ENCODE measurements at regions of chr12 and their contacts with region 1.

Region 1: GRCh38 chr12:27305673-27306456 is 26.8 kb upstream of the BMAL2 start:
- DNase-seq: no peak
- H3K4me3 Mint-ChIP-seq: no peak overlapping the region
- H3K27ac Mint-ChIP-seq: no peak overlapping the region
- H3K4me1 Mint-ChIP-seq: no peaks in the 10 kb centered on the region
- H3K27me3 Mint-ChIP-seq: no peaks in the 10 kb centered on the region

Region 2: GRCh38 chr12:26971963-26972362 is 333.9 kb before region 1 on chr12:
- CTCF ChIA-PET with region 1: interaction called, 11 read pairs
- intact Hi-C with region 1: no loop called
- DNase-seq: peak; percentile 92
- H3K4me3 Mint-ChIP-seq: no peak overlapping the region
- H3K27ac Mint-ChIP-seq: no peak overlapping the region
- H3K4me1 Mint-ChIP-seq: peaks cover 9% of the 10 kb centered on the region
- H3K27me3 Mint-ChIP-seq: no peaks in the 10 kb centered on the region

Region 3: DNA sequence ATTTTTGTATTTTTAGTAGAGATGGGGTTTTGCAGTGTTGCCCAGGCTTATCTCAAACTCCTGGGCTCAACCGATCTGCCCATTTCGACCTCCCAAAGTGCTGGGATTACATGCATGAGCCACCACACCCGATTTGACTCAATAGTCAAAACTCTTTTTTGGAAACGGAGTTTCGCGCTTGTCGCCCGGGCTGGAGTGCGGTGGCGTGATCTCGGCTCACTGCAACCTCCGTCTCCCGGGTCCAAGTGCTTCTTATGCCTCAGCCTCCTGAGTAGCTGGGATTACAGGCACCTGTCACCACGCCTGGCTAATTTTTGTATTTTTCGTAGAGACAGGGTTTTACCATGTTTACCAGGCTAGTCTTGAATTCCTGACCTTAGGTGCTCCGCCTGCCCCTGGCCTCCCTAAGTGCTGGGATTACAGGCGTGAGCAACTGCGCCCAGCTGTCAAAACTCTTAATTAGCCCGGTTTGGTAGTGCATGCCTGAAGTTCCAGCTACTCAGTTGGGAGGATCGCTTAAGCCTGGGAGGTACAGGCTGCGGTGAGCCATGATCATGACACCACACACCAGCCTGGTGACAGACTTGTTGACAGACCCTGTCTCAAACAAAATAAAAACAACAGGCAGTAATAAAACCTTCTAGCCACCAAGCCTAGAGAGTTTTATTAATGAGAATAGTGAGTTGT is 271.1 kb before region 1 on chr12:
- CTCF ChIA-PET with region 1: interaction called, 6 read pairs
- intact Hi-C with region 1: loop called (anchors 1 kb)
- DNase-seq: no peak
- H3K4me3 Mint-ChIP-seq: no peak overlapping the region
- H3K27ac Mint-ChIP-seq: no peak overlapping the region
- H3K4me1 Mint-ChIP-seq: no peaks in the 10 kb centered on the region
- H3K27me3 Mint-ChIP-seq: no peaks in the 10 kb centered on the region

Region 4: DNA sequence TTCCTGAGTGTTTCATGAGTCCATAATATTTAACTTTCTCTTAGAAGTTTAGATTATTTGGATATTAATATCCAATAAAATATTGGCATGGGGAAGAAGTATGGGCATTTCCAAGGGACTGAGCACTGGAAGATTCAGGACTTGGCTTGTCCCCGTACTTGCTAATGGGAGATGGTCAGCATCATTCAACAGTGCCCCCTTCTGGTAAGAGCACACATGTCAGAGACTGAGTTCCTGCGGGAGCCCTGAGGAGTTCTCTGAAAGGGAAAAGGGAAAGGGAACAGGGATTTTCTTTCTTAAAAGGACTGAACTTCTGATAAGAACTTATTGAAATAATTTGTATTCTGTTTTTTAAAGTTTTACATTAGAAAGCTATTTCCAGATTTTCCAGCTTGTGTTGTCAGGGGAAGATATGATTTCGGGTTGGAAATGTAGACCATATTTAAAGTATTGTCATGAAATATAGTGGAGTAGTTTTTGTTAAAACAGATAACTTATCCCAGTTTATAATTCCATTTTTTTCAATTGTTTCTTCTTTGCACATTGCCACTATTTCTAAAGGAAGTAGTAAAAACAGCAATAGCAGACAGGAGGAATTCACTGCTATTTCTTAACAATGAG is 163.7 kb before region 1 on chr12:
- CTCF ChIA-PET with region 1: interaction called, 5 read pairs
- intact Hi-C with region 1: loop called (anchors 1 kb)
- DNase-seq: peak; percentile 61
- H3K4me3 Mint-ChIP-seq: no peak overlapping the region
- H3K27ac Mint-ChIP-seq: no peak overlapping the region
- H3K4me1 Mint-ChIP-seq: peaks cover 10% of the 10 kb centered on the region
- H3K27me3 Mint-ChIP-seq: no peaks in the 10 kb centered on the region

Region 5: GRCh38 chr12:27243804-27244683 is 61.8 kb before region 1 on chr12 and contains the start of gene STK38L:
- CTCF ChIA-PET with region 1: interaction called, 13 read pairs
- intact Hi-C with region 1: loop called (anchors 2 kb)
- DNase-seq: peak; percentile 98
- H3K4me3 Mint-ChIP-seq: peak within 1 kb of the TSS; percentile 98
- H3K27ac Mint-ChIP-seq: peak within 1 kb of the TSS; percentile 91
- H3K4me1 Mint-ChIP-seq: peaks cover 47% of the 10 kb centered on the region
- H3K27me3 Mint-ChIP-seq: no peaks in the 10 kb centered on the region
- total RNA-seq, gene STK38L: 21.3 to 21.4 TPM

Region 6: DNA sequence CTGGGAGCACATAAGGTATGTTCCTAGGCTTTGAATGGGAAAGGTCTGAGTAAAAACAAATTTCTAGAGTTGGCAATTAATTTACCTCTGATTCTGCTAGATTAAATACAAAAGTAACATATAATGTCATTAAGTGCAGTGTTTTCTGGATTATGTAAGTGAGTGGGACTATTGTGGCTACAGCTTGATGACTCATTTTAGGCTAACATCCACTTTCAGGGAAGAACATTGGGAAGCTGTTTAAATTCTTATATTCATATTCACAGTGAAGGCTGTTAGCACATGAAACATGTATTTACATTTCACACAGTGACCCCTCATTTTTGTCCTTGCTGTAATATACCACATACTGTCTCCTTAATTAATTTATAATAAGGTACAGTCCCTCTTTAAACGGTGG is 13.5 kb after region 1 on chr12:
- CTCF ChIA-PET with region 1: interaction called, 15 read pairs
- intact Hi-C with region 1: no loop called
- DNase-seq: no peak
- H3K4me3 Mint-ChIP-seq: no peak overlapping the region
- H3K27ac Mint-ChIP-seq: no peak overlapping the region
- H3K4me1 Mint-ChIP-seq: no peaks in the 10 kb centered on the region
- H3K27me3 Mint-ChIP-seq: no peaks in the 10 kb centered on the region

Region 7: DNA sequence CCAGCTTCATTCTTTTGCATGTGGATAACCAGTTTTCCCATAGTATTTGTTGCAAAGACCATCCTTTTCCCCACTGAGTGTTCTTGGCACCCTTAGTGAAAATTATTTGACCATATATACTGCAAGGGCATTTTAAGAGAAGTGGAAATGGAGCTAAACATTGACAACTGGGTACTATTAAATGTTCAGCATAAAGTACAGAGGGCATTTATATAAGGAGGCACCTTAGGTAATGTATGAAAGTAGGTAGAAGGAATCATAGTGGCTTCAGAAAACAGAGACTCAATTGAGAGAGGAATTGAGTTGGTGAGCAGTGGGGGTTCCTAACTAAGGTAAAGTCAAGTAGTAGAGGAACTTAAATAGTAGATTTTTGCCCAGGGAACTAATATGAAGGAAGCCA is 106.2 kb after region 1 on chr12:
- CTCF ChIA-PET with region 1: no interaction called
- intact Hi-C with region 1: no loop called
- DNase-seq: no peak
- H3K4me3 Mint-ChIP-seq: no peak overlapping the region
- H3K27ac Mint-ChIP-seq: no peak overlapping the region
- H3K4me1 Mint-ChIP-seq: no peaks in the 10 kb centered on the region
- H3K27me3 Mint-ChIP-seq: peaks cover 3% of the 10 kb centered on the region

Region 8: GRCh38 chr12:27703710-27704452 is 398.0 kb after region 1 on chr12:
- CTCF ChIA-PET with region 1: no interaction called
- intact Hi-C with region 1: loop called (anchors 2 kb)
- DNase-seq: peak; percentile 92
- H3K4me3 Mint-ChIP-seq: no peak overlapping the region
- H3K27ac Mint-ChIP-seq: no peak overlapping the region
- H3K4me1 Mint-ChIP-seq: peaks cover 2% of the 10 kb centered on the region
- H3K27me3 Mint-ChIP-seq: no peaks in the 10 kb centered on the region

Measured in activated naive CD4-positive, alpha-beta T cell treated with anti-CD3 and anti-CD28 coated beads for 36 hours (primary cell).